ENCODE measurements at regions of chr6 and their contacts with region 1.

Region 1: GRCh38 chr6:25017932-25018567 is 82.3 kb upstream of the RIPOR2 start:
- DNase-seq: peak; percentile 66 to 75
- H3K4me3 ChIP-seq: no peak overlapping the region
- H3K27ac ChIP-seq: no peak overlapping the region
- H3K4me1 ChIP-seq: peaks cover 0 to 10% (median 0%) of the 10 kb centered on the region in 4 experiments; a peak in 4 of 7 replicates
- H3K27me3 ChIP-seq: no peaks in the 10 kb centered on the region
- CTCF ChIP-seq: peak; percentile 43 to 94 (median 91)
- EP300 ChIP-seq: no peak
- POLR2A ChIP-seq: no peak
- RAD21 ChIP-seq: peak; percentile 100

Region 2: GRCh38 chr6:24402697-24403501 is 615.2 kb before region 1 on chr6 and contains the start of gene MRS2:
- CTCF ChIA-PET with region 1: no interaction called
- POLR2A ChIA-PET with region 1: no interaction called
- DNase-seq: peak; percentile 78 to 90
- H3K4me3 ChIP-seq: peak within 1 kb of the TSS; percentile 73 to 94 (median 86)
- H3K27ac ChIP-seq: peak within 1 kb of the TSS; percentile 80
- H3K4me1 ChIP-seq: peaks cover 5 to 21% (median 12%) of the 10 kb centered on the region in 4 experiments
- H3K27me3 ChIP-seq: no peaks in the 10 kb centered on the region
- CTCF ChIP-seq: no peak
- EP300 ChIP-seq: no peak
- POLR2A ChIP-seq: peak; percentile 66 to 90
- RAD21 ChIP-seq: no peak
- total RNA-seq, gene MRS2: 67.5 and 68.4 TPM in 2 replicates

Region 3: DNA sequence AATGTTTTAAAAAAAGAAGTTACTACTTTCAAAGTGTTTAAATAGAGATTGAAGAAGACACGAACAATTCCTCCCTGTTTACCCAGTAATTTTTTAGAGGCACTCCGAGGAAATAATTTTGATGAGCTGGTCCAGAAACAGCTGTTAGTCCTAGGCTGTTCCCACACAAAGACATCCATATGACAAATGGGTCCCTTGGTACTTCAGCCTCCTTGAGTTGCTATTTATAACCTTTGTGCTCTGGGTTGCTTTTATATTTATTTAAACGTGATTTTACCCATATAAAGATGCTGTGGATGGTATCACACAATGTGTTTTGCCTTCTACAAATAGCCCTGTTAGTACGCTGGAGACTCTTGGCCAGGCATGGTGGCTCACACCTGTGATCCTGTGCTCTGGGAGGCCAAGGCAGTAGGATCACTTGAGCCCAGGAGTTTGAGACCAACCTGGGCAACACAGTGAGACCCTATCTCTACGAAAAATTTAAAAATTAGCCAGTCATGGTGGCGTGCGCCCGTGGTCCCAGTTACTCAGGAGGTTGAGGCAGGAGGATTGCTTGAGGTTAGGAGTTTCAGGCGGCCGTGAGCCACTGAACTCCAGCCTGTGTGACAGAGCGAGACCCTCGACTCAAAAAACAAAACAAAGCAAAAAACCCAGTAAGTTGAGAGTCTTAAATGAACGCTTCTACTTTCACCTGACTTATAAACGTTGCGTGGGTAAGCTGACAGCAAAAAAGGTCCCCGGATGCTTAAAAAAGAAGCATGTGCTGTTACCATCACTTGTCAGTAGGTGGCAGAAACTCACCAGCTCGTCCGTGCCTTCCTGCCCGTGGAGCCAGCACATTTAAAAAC is 162.4 kb before region 1 on chr6:
- CTCF ChIA-PET with region 1: interaction called, 61 read pairs
- POLR2A ChIA-PET with region 1: interaction called, 6 read pairs
- DNase-seq: peak; percentile 41 to 59
- H3K4me3 ChIP-seq: no peak overlapping the region
- H3K27ac ChIP-seq: no peak overlapping the region
- H3K4me1 ChIP-seq: no peaks in the 10 kb centered on the region
- H3K27me3 ChIP-seq: no peaks in the 10 kb centered on the region
- CTCF ChIP-seq: peak; percentile 81 to 85 (median 83)
- EP300 ChIP-seq: no peak
- POLR2A ChIP-seq: no peak
- RAD21 ChIP-seq: peak; percentile 96 to 97

Region 4: DNA sequence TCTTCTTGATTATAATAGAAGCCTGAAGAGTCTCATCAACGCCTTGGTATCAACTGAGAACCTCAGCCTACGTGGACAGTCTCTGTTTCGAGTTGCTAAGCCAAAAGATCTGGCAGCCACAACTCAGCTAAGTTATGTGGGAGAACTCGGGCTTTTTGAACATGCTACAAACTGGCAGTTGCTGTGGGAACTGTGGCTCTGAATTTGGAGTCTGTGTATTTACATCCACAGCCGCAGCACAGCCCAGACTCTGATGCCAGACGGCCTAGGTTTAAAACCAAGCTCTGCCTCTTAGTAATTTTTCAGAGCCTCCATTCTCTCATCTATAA is 118.1 kb before region 1 on chr6:
- CTCF ChIA-PET with region 1: interaction called, 15 read pairs
- POLR2A ChIA-PET with region 1: no interaction called
- DNase-seq: no peak
- H3K4me3 ChIP-seq: no peak overlapping the region
- H3K27ac ChIP-seq: no peak overlapping the region
- H3K4me1 ChIP-seq: peaks cover 4 to 6% (median 5%) of the 10 kb centered on the region in 4 experiments; a peak in 4 of 7 replicates
- H3K27me3 ChIP-seq: no peaks in the 10 kb centered on the region
- CTCF ChIP-seq: no peak
- EP300 ChIP-seq: no peak
- POLR2A ChIP-seq: no peak
- RAD21 ChIP-seq: no peak

Region 5: DNA sequence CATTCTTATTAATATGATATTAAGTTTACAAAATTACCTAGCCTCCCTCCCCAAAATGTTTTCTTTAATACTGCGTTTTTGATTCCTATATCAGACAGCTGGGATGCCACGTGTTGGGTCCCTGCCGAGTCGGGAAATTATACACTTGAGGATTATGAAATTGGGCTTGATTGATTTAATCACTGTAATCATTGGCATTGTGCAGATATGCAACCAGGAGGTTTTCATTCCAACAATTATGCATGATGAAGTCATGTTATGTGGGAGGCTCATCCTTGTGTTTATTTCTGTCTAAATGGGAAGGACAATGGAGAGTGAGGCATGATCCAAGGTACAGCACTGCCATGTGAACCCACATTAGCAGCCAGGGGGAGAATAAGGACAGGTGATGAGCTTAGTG is 51.7 kb before region 1 on chr6:
- CTCF ChIA-PET with region 1: interaction called, 10 read pairs
- POLR2A ChIA-PET with region 1: no interaction called
- DNase-seq: no peak
- H3K4me3 ChIP-seq: no peak overlapping the region
- H3K27ac ChIP-seq: no peak overlapping the region
- H3K4me1 ChIP-seq: peaks cover 0 to 7% (median 2%) of the 10 kb centered on the region in 4 experiments; a peak in 2 of 7 replicates
- H3K27me3 ChIP-seq: no peaks in the 10 kb centered on the region
- CTCF ChIP-seq: no peak
- EP300 ChIP-seq: no peak
- POLR2A ChIP-seq: no peak
- RAD21 ChIP-seq: no peak

Region 6: DNA sequence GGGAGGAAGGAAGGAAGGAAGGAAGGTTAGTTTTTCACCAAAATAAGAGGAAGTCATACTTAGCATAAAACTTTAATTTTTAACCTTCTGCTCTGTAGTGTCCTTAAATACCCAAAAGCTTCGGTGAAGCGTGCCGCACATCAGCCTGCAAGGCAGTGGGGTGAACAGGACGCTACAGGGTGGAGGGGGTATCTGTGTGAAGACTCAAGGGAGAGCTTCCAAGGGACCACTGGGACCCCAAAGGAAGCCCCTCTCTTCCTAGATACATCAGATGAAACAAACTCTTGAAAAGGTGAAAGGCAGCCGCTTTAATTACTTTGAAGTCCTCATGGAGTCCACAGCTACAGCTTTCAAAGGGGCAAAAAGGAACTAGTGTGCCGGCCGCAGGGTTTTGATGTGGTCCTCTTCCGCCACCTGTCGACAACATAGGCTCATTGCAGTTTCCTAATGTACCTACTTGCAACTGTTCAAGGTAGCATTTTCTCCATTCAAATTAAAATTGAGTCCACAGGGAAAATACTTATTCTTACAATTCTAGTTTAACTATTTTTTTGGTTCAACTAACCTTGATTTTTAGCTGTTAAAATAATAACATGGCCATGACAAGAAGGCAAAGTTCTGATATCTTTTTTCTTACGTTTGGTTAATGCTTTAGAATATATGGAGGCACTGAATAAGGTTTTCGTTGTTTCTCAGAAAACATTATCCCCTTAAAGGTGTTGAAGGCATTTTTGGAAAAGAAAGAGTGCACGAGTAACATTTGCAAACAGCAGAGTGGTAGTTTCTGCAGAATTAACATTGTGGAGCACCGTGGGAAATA is 52.7 kb after region 1 on chr6:
- CTCF ChIA-PET with region 1: interaction called, 12 read pairs
- POLR2A ChIA-PET with region 1: no interaction called
- DNase-seq: peak; percentile 62 to 84
- H3K4me3 ChIP-seq: no peak overlapping the region
- H3K27ac ChIP-seq: no peak overlapping the region
- H3K4me1 ChIP-seq: no peaks in the 10 kb centered on the region; a peak in 1 of 7 replicates
- H3K27me3 ChIP-seq: no peaks in the 10 kb centered on the region
- CTCF ChIP-seq: peak; percentile 57 to 91 (median 74)
- EP300 ChIP-seq: no peak
- POLR2A ChIP-seq: no peak
- RAD21 ChIP-seq: peak; percentile 94 to 95